ENCODE measurements at regions of chr3 and their contacts with region 1.

Region 1: GRCh38 chr3:13452490-13453335 is 27.4 kb upstream of the HDAC11 start:
- DNase-seq: peak in 8 of 9 experiments; percentile 7 to 77 (median 50)
- ATAC-seq: peak; percentile 19
- H3K4me3 ChIP-seq: peak overlapping the region; percentile 6 to 69
- H3K4me3 Mint-ChIP-seq: peak overlapping the region; percentile 96
- H3K27ac ChIP-seq: peak overlapping the region; percentile 28 to 73
- H3K27ac Mint-ChIP-seq: peak overlapping the region; percentile 95
- H3K4me1 ChIP-seq: peaks cover 18% of the 10 kb centered on the region
- H3K4me1 Mint-ChIP-seq: peaks cover 19% of the 10 kb centered on the region
- H3K27me3 ChIP-seq: no peaks in the 10 kb centered on the region
- H3K27me3 Mint-ChIP-seq: no peaks in the 10 kb centered on the region
- CTCF ChIP-seq: peak; percentile 83

Region 2: DNA sequence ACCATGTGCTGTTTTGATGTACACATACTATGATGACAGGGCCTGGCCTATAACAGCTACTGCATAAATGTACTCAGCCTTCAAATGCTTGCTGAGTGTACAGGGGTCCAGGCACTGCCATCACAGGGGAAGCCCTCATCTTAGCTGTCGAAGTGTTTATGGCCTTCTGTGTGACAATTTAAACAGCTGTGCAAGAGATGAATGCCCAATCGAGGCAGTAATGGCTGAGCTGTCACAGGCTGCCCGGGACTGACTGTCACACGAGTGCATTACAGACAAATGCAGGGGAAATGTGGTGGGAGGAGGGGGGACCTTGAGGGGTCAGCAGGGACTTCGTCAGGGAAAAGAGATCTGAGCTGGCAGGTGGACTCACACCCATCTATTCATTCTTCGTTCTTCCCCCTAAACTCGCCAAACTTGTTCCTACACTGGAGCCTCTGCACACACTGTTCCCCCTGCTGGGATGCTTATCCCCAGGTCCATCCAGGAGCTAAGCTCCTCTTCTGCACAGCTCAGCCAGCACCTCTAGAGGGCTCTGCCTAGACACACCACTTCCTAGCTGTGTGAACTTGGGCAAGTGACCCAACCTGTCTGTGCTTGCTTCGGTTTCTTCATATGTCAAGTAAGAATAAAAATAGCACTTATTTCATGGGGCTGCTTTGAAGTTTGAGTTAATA is 223.3 kb before region 1 on chr3:
- CTCF ChIA-PET with region 1: interaction called, 13 read pairs
- POLR2A ChIA-PET with region 1: no interaction called
- intact Hi-C with region 1: no loop called
- DNase-seq: peak in 1 of 9 experiments; percentile 21
- ATAC-seq: no peak
- H3K4me3 ChIP-seq: no peak overlapping the region
- H3K4me3 Mint-ChIP-seq: no peak overlapping the region
- H3K27ac ChIP-seq: no peak overlapping the region
- H3K27ac Mint-ChIP-seq: no peak overlapping the region
- H3K4me1 ChIP-seq: peaks cover 12% of the 10 kb centered on the region
- H3K4me1 Mint-ChIP-seq: peaks cover 10% of the 10 kb centered on the region
- H3K27me3 ChIP-seq: peaks cover 0 to 3% of the 10 kb centered on the region in 2 experiments
- H3K27me3 Mint-ChIP-seq: peaks cover 4% of the 10 kb centered on the region
- CTCF ChIP-seq: no peak

Region 3: DNA sequence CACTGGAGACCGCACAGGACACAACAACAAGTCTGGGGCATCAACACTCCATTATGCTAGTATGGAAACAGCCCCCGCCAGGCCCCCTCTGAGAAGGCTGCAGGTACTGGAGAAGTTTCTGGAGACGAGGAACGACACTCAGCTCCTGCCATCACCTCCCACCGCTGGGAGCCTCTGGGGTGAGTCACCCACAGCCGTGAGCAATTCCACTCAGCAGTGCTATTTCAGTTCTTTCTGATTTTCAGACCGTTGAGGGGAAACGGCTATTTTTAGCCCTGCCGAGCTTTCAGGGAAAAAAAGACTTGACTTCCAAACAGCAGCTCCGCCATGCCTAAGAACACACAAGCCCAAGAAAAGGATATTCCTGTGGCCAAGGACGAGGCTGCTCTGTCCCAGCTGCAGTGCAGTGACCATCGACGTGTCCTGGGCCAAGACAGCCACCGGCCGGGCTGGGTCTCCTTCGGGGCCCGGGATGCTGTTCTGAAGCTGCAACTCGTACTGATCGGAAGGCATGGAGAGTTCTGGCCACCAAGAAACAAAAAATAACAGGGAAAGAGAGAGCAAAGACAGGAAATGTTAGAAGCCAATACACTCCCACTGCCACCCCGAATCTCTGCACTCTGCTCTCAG is 73.4 kb before region 1 on chr3:
- CTCF ChIA-PET with region 1: interaction called, 23 read pairs
- POLR2A ChIA-PET with region 1: no interaction called
- intact Hi-C with region 1: no loop called
- DNase-seq: no peak
- ATAC-seq: no peak
- H3K4me3 ChIP-seq: no peak overlapping the region
- H3K4me3 Mint-ChIP-seq: no peak overlapping the region
- H3K27ac ChIP-seq: no peak overlapping the region
- H3K27ac Mint-ChIP-seq: no peak overlapping the region
- H3K4me1 ChIP-seq: no peaks in the 10 kb centered on the region
- H3K4me1 Mint-ChIP-seq: peaks cover 8% of the 10 kb centered on the region
- H3K27me3 ChIP-seq: no peaks in the 10 kb centered on the region
- H3K27me3 Mint-ChIP-seq: no peaks in the 10 kb centered on the region
- CTCF ChIP-seq: no peak

Region 4: DNA sequence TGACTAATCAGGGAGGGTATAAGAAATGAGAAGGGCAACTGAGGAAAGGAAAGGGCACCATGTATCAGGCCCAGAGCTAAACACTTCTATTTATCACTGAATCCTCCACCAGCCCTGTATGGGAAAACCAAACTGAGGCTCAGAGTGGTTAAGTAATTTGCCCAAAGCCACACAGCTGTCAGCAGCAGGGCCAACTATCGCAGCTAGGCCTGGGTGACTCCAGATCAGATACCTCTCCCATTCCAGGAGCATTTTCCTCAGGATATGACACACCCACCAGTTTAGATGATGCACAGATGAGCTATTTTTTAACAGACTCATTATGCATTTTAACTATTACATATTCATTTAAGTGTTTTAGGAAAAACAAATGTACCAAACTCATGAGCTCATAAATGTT is 47.1 kb before region 1 on chr3:
- CTCF ChIA-PET with region 1: interaction called, 117 read pairs
- POLR2A ChIA-PET with region 1: interaction called, 6 read pairs
- intact Hi-C with region 1: no loop called
- DNase-seq: no peak
- ATAC-seq: no peak
- H3K4me3 ChIP-seq: no peak overlapping the region
- H3K4me3 Mint-ChIP-seq: no peak overlapping the region
- H3K27ac ChIP-seq: no peak overlapping the region
- H3K27ac Mint-ChIP-seq: peak overlapping the region; percentile 75
- H3K4me1 ChIP-seq: peaks cover 34% of the 10 kb centered on the region
- H3K4me1 Mint-ChIP-seq: peaks cover 61% of the 10 kb centered on the region
- H3K27me3 ChIP-seq: no peaks in the 10 kb centered on the region
- H3K27me3 Mint-ChIP-seq: no peaks in the 10 kb centered on the region
- CTCF ChIP-seq: no peak

Region 5: DNA sequence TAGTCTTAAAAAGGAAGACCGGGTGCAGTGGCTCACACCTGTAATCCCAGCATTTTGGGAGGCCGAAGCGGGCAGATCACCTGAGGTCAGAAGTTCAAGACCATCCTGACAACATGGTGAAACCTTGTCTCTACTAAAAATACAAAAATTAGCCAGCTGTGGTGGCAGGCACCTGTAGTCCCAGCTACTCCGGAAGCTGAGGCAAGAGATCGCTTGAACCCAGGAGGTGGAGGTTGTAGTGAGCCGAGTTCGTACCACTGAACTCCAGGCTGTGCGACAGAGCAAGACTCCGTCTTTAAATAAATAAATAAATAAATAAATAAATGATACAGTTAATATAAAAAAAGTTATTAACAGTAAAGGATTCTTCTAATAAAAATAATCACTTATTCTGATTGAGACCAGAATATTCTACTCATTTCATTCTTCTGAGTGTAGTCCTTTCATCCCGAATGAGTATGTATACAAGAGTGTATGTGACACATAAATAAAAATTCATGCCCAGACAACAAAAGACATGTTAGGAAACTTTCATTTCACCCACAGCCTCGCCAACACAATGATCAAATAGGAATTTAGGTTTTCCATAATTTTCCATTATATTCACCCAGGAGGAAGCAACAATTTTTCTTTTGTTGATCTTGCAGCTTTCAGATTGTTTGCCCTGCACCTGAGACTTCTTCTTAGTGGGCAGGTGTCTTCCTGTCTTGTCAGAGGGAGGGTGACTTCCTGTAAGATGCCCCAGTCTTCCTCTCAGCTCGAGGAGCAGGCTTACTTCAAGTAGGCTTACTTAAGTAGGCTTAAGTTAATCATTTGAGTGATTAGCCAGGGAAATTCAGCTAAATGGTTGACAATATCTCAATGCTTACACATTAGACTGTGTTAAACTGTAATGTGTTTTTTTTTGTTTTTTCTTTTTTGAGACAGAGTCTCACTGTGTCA is 24.8 kb before region 1 on chr3:
- CTCF ChIA-PET with region 1: interaction called, 37 read pairs
- POLR2A ChIA-PET with region 1: interaction called, 8 read pairs
- intact Hi-C with region 1: no loop called
- DNase-seq: peak in 5 of 9 experiments; percentile 35 to 78 (median 51)
- ATAC-seq: peak; percentile 99
- H3K4me3 ChIP-seq: peak overlapping the region in 1 of 2 experiments; percentile 2
- H3K4me3 Mint-ChIP-seq: peak overlapping the region; percentile 63
- H3K27ac ChIP-seq: peak overlapping the region; percentile 37 to 44
- H3K27ac Mint-ChIP-seq: peak overlapping the region; percentile 91
- H3K4me1 ChIP-seq: peaks cover 19% of the 10 kb centered on the region
- H3K4me1 Mint-ChIP-seq: peaks cover 36% of the 10 kb centered on the region
- H3K27me3 ChIP-seq: no peaks in the 10 kb centered on the region
- H3K27me3 Mint-ChIP-seq: no peaks in the 10 kb centered on the region
- CTCF ChIP-seq: no peak

Region 6: DNA sequence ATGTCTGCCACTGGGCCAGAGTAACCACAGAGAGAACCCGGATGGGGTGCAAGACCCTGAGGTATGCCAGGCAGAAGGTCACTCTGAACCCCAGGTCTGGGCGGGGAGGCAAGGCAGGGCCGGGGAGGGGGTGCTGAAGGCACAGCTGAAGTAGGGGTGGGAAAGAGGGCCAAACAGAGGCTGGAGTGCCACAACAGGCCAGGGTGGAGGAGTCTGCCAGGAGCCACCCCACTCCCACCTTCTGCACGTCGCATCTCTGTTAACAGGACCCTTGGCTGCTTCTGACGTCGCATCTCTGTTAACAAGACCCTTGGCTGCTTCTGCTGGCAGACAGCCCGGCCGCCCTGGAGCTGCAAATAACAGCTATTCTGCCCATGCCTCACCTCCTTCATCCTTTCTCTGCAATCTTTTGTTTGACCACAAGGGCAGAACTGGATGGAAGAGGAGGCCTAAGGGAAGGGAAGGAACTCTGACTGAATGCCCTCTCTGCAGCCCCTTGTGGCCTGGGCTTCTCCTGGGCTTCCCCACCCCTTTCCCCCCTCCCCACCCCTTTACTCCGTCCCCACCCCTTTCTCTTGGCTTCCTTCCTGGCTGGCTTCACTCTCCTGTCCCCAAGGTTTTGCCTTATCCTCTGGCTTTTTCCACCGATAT is 75.6 kb after region 1 on chr3:
- CTCF ChIA-PET with region 1: no interaction called
- POLR2A ChIA-PET with region 1: no interaction called
- intact Hi-C with region 1: no loop called
- DNase-seq: no peak
- ATAC-seq: no peak
- H3K4me3 ChIP-seq: no peak overlapping the region
- H3K4me3 Mint-ChIP-seq: no peak overlapping the region
- H3K27ac ChIP-seq: no peak overlapping the region
- H3K27ac Mint-ChIP-seq: no peak overlapping the region
- H3K4me1 ChIP-seq: no peaks in the 10 kb centered on the region
- H3K4me1 Mint-ChIP-seq: no peaks in the 10 kb centered on the region
- H3K27me3 ChIP-seq: no peaks in the 10 kb centered on the region
- H3K27me3 Mint-ChIP-seq: no peaks in the 10 kb centered on the region
- CTCF ChIP-seq: no peak